Adrenal gland (tissue), 19 donors: ENCODE measurements at regions of chr9 and their contacts with region 1.

Region 1: GRCh38 chr9:93108291-93109041 is 12.4 kb downstream of the CARD19 start:
- DNase-seq: peak; percentile 23 to 57 (median 36)
- H3K4me3 ChIP-seq: no peak overlapping the region
- H3K27ac ChIP-seq: peak overlapping the region in 1 of 5 donors; percentile 17
- H3K4me1 ChIP-seq: peaks cover 19 to 33% of the 10 kb centered on the region in 2 donors
- H3K27me3 ChIP-seq: no peaks in the 10 kb centered on the region
- CTCF ChIP-seq: no peak
- POLR2A ChIP-seq: no peak

Region 2: DNA sequence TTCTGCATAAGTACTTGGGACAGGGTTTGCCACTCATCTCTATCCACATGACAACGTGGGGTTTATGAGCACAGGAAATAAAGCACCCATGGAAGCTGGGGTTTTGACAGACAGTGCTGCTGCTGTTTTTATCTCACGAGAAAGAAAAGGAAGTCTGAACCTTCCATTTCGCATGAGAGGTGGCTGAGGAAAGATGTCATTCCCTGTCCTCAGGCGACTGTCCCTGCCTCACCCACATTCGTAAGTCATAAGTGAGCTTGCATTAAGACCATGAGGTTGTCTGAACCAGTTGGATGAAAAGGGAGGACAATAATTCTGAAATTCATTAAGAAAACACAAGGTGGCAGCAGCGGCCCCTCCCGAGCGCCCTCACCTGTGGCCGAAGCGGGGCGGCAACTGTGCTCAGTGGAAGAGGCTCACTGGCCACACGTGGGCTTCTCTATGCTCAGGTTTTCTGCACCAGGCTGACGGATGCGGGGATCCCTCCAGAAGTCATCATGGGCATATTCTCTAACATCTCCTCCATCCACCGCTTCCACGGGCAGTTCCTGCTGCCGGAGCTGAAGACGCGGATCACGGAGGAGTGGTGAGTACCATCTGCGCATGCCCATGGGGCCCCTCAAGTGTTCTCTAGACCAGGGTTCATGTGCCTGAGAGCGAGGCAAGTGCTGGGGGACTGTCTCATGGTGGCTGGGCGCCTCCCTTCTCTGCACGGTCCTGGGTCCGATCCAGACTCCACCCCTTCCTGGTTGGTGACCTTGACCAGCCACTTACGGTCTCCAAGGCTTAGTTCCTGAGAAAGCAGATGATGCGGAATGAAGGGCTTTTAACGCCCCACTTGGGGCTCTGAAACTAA is 104.7 kb before region 1 on chr9:
- intact Hi-C with region 1: loop called in 1 of 2 experiments (anchors 5 kb)
- DNase-seq: peak; percentile 45 to 79 (median 68)
- H3K4me3 ChIP-seq: peak overlapping the region in 2 of 4 donors; percentile 4 to 29
- H3K27ac ChIP-seq: no peak overlapping the region
- H3K4me1 ChIP-seq: no peaks in the 10 kb centered on the region
- H3K27me3 ChIP-seq: no peaks in the 10 kb centered on the region
- CTCF ChIP-seq: peak; percentile 65 to 76 (median 70)
- POLR2A ChIP-seq: no peak

Region 3: GRCh38 chr9:93159601-93160471 is 51.4 kb after region 1 on chr9:
- intact Hi-C with region 1: loop called in 1 of 2 experiments (anchors 5 kb)
- DNase-seq: peak; percentile 77 to 93 (median 87)
- H3K4me3 ChIP-seq: no peak overlapping the region
- H3K27ac ChIP-seq: no peak overlapping the region
- H3K4me1 ChIP-seq: no peaks in the 10 kb centered on the region
- H3K27me3 ChIP-seq: no peaks in the 10 kb centered on the region
- CTCF ChIP-seq: peak; percentile 93 to 98 (median 96)
- POLR2A ChIP-seq: no peak

Region 4: GRCh38 chr9:93302551-93303257 is 194.2 kb after region 1 on chr9:
- intact Hi-C with region 1: loop called in 1 of 2 experiments (anchors 10 kb)
- DNase-seq: peak; percentile 54 to 81 (median 74)
- H3K4me3 ChIP-seq: no peak overlapping the region
- H3K27ac ChIP-seq: no peak overlapping the region
- H3K4me1 ChIP-seq: no peaks in the 10 kb centered on the region
- H3K27me3 ChIP-seq: no peaks in the 10 kb centered on the region
- CTCF ChIP-seq: peak; percentile 42 to 62 (median 60)
- POLR2A ChIP-seq: no peak

Region 5: GRCh38 chr9:93600504-93600903 is 492.0 kb after region 1 on chr9:
- intact Hi-C with region 1: no loop called
- DNase-seq: peak in 2 of 7 donors; percentile 8 to 43
- H3K4me3 ChIP-seq: no peak overlapping the region
- H3K27ac ChIP-seq: no peak overlapping the region
- H3K4me1 ChIP-seq: no peaks in the 10 kb centered on the region
- H3K27me3 ChIP-seq: no peaks in the 10 kb centered on the region
- CTCF ChIP-seq: no peak
- POLR2A ChIP-seq: no peak